B cell (primary cell): ENCODE measurements at regions of chr13 and their contacts with region 1.

Region 1: DNA sequence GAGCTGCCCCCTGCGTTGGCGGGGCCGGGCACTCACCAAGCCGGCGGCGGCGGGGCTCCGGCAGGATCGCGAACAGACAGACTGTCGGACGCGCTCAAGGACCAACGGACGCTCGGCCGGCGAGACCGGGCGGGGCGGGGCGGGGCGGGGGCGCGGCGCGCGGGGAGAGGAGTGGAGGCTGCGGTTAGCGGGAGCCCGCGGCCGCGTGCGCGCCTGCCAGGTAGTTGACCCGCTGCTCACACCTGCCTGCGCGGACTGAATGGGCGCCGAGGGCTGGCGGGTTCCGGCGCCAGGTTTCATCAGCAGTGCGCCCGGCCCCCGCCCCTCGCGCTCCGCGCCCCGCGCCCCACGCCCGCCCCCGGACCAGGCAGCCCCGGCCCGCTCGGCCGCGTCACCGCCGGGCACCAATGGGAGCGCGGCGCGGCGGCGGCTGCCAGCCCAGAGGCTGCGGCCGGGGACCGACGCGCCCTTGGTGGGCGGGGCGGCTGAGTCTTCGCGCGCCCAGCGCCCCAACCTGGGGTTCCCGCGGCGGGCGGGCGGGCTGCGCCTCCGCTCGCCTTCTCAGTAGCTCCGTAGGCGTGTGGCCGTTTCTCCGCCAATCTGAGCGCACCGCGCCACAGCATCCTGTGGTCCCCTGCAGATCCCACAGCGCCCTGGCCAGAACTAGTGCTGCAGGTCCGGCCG is at the start of gene SLC7A1:
- DNase-seq: peak; percentile 91
- ATAC-seq: peak; percentile 91
- H3K4me3 ChIP-seq: peak within 1 kb of the TSS; percentile 49 to 89 (median 68)
- H3K4me3 Mint-ChIP-seq: peak within 1 kb of the TSS; percentile 92
- H3K27ac ChIP-seq: peak within 1 kb of the TSS; percentile 40 to 82
- H3K27ac Mint-ChIP-seq: peak within 1 kb of the TSS; percentile 92
- H3K4me1 ChIP-seq: peaks cover 9 to 13% of the 10 kb centered on the region in 2 donors
- H3K4me1 Mint-ChIP-seq: peaks cover 34% of the 10 kb centered on the region
- H3K27me3 ChIP-seq: no peaks in the 10 kb centered on the region
- H3K27me3 Mint-ChIP-seq: peaks cover 6% of the 10 kb centered on the region
- CTCF ChIP-seq: no peak
- total RNA-seq, gene SLC7A1: 23.1 and 24.2 TPM in 2 replicates

Region 2: DNA sequence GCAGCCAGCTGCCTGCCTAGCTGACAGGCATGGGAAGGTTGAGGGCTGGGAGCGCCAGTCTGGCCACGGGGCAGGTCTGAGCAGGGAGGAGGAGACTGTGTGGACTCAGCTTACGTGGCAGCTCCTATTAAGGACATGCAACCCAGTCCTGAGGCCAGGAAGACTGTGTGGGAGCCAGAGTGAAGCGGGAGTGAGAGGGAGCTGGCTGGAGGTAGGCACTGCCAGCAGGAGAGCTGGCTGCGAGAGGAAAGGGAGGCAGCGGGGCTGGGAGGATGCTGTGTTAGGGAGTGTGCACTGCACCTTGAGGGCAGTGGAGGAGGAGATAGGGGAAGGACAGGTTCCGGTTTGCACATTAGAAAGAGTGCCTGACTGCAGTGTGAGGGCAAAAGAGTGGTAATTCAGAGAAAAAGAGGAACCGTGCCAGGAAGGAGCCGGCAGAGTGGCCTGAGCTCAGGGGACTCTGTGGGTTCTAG is 99.2 kb before region 1 on chr13:
- CTCF ChIA-PET with region 1: no interaction called
- POLR2A ChIA-PET with region 1: interaction called, 3 read pairs
- intact Hi-C with region 1: loop called (anchors 2 kb)
- DNase-seq: peak; percentile 78
- ATAC-seq: peak; percentile 68
- H3K4me3 ChIP-seq: peak overlapping the region in 4 of 5 experiments; percentile 14 to 48 (median 26)
- H3K4me3 Mint-ChIP-seq: peak overlapping the region; percentile 86
- H3K27ac ChIP-seq: peak overlapping the region; percentile 46 to 47
- H3K27ac Mint-ChIP-seq: peak overlapping the region; percentile 80
- H3K4me1 ChIP-seq: peaks cover 36 to 39% of the 10 kb centered on the region in 2 donors
- H3K4me1 Mint-ChIP-seq: peaks cover 36% of the 10 kb centered on the region
- H3K27me3 ChIP-seq: no peaks in the 10 kb centered on the region
- H3K27me3 Mint-ChIP-seq: no peaks in the 10 kb centered on the region
- CTCF ChIP-seq: no peak

Region 3: GRCh38 chr13:29508130-29508875 is 87.2 kb before region 1 on chr13:
- CTCF ChIA-PET with region 1: no interaction called
- POLR2A ChIA-PET with region 1: no interaction called
- intact Hi-C with region 1: no loop called
- DNase-seq: peak; percentile 77
- ATAC-seq: peak; percentile 82
- H3K4me3 ChIP-seq: no peak overlapping the region
- H3K4me3 Mint-ChIP-seq: no peak overlapping the region
- H3K27ac ChIP-seq: no peak overlapping the region
- H3K27ac Mint-ChIP-seq: no peak overlapping the region
- H3K4me1 ChIP-seq: peaks cover 0 to under 1% of the 10 kb centered on the region in 2 donors
- H3K4me1 Mint-ChIP-seq: peaks cover 6% of the 10 kb centered on the region
- H3K27me3 ChIP-seq: peaks cover 0 to 19% (median 6%) of the 10 kb centered on the region in 4 experiments
- H3K27me3 Mint-ChIP-seq: peaks cover 18% of the 10 kb centered on the region
- CTCF ChIP-seq: peak; percentile 98

Region 4: DNA sequence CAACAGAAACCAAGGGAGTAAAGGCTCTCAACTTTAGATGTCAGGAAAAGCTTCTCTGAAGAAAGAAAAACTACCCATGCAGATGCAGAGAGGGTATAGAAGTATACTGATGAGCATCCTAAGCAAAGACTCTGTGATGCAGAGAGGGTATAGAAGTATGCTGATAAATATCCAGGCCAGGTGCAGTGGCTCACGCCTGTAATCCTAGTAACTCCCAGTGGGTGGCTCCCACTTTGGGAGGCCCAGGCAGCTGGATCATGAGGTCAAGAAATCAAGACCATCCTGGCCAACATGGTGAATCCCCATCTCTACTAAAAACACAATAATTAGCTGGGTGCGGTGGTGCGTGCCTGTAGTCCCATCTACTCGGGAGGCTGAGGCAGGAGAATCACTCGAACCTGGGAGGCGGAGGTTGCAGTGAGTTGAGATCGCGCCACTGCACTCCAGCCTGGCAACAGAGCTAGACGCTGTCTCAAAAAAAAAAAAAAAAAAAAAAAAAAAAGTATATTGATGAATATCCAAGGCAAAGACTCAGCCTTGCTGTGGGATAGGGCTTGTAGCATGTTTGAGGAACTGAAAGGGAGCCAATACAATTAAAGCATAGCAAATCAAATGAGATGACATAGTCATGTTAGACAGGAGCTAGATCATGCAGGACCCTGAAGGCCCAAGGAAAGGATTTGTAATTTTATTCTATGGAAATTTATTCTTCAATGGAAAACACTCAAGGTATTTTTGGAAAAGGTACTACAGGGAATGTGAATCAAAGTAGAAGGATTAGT is 239.9 kb after region 1 on chr13:
- CTCF ChIA-PET with region 1: no interaction called
- POLR2A ChIA-PET with region 1: no interaction called
- intact Hi-C with region 1: no loop called
- DNase-seq: peak; percentile 34
- ATAC-seq: peak; percentile 68
- H3K4me3 ChIP-seq: no peak overlapping the region
- H3K4me3 Mint-ChIP-seq: no peak overlapping the region
- H3K27ac ChIP-seq: no peak overlapping the region
- H3K27ac Mint-ChIP-seq: no peak overlapping the region
- H3K4me1 ChIP-seq: peaks cover 11 to 12% of the 10 kb centered on the region in 2 donors
- H3K4me1 Mint-ChIP-seq: peaks cover 50% of the 10 kb centered on the region
- H3K27me3 ChIP-seq: no peaks in the 10 kb centered on the region
- H3K27me3 Mint-ChIP-seq: no peaks in the 10 kb centered on the region
- CTCF ChIP-seq: no peak

Region 5: GRCh38 chr13:29850224-29850898 is 254.8 kb after region 1 on chr13 and contains the start of gene UBL3:
- CTCF ChIA-PET with region 1: no interaction called
- POLR2A ChIA-PET with region 1: no interaction called
- intact Hi-C with region 1: loop called (anchors 1 kb)
- DNase-seq: peak; percentile 97
- ATAC-seq: peak; percentile 92
- H3K4me3 ChIP-seq: peak within 1 kb of the TSS; percentile 78 to 99 (median 87)
- H3K4me3 Mint-ChIP-seq: peak within 1 kb of the TSS; percentile 91
- H3K27ac ChIP-seq: peak within 1 kb of the TSS; percentile 93 to 94
- H3K27ac Mint-ChIP-seq: peak within 1 kb of the TSS; percentile 99
- H3K4me1 ChIP-seq: peaks cover 17 to 20% of the 10 kb centered on the region in 2 donors
- H3K4me1 Mint-ChIP-seq: peaks cover 28% of the 10 kb centered on the region
- H3K27me3 ChIP-seq: no peaks in the 10 kb centered on the region
- H3K27me3 Mint-ChIP-seq: no peaks in the 10 kb centered on the region
- CTCF ChIP-seq: no peak
- total RNA-seq, gene UBL3: 26.4 and 27.9 TPM in 2 replicates